ENCODE measurements at regions of chr6 and their contacts with region 1.

Region 1: GRCh38 chr6:41735427-41736356 is at the start of gene TFEB:
- DNase-seq: peak; percentile 96
- H3K4me3 ChIP-seq: peak within 1 kb of the TSS; percentile 79 to 98 (median 86)
- H3K27ac ChIP-seq: peak within 1 kb of the TSS; percentile 97 to 98 (median 98)
- H3K4me1 ChIP-seq: peaks cover 27 to 41% (median 32%) of the 10 kb centered on the region in 4 donors
- H3K27me3 ChIP-seq: no peaks in the 10 kb centered on the region
- CTCF ChIP-seq: peak; percentile 76 to 94 (median 88)
- EP300 ChIP-seq: no peak
- POLR2A ChIP-seq: no peak
- total RNA-seq, gene TFEB: 30.4 to 47.1 (median 38.1) TPM

Region 2: DNA sequence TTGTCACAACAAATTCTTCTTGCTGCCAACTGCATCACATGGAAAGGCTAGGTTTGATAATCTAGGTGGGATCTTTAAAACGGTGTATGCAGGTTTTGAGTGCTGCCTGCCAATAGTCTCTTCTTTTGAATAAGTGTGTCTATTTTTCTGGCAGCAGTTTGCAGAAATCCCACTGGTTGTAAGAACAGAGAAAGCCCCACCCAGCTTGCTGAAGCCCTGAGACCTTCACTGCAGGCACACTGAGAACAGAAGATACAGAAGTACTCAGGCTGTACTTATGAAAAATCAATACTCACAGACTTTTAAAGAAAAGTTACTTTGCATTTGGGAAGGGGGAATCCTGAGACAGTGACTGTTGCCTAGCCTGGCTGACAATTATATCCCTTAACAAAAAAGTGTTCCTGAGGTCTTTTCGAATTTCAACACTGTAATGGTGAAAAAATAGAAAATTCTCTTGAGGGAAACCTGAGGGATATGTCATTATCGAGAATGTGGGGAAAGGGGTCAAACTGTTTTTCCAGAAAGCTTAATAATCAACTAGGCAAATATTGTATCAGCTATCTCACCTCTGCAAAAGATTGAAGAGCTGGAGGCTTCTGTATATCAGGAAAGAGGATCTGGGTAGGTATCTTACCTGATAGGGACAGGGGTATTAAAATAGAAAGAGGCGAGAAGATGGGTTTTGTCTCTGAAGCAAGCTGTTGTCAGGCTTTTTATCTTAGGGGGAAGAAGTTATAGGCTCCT is 1348.4 kb before region 1 on chr6:
- in situ Hi-C with region 1: no loop called
- intact Hi-C with region 1: no loop called
- DNase-seq: no peak
- H3K4me3 ChIP-seq: no peak overlapping the region
- H3K27ac ChIP-seq: no peak overlapping the region
- H3K4me1 ChIP-seq: no peaks in the 10 kb centered on the region
- H3K27me3 ChIP-seq: peaks cover 19% of the 10 kb centered on the region
- CTCF ChIP-seq: no peak
- EP300 ChIP-seq: no peak
- POLR2A ChIP-seq: no peak

Region 3: DNA sequence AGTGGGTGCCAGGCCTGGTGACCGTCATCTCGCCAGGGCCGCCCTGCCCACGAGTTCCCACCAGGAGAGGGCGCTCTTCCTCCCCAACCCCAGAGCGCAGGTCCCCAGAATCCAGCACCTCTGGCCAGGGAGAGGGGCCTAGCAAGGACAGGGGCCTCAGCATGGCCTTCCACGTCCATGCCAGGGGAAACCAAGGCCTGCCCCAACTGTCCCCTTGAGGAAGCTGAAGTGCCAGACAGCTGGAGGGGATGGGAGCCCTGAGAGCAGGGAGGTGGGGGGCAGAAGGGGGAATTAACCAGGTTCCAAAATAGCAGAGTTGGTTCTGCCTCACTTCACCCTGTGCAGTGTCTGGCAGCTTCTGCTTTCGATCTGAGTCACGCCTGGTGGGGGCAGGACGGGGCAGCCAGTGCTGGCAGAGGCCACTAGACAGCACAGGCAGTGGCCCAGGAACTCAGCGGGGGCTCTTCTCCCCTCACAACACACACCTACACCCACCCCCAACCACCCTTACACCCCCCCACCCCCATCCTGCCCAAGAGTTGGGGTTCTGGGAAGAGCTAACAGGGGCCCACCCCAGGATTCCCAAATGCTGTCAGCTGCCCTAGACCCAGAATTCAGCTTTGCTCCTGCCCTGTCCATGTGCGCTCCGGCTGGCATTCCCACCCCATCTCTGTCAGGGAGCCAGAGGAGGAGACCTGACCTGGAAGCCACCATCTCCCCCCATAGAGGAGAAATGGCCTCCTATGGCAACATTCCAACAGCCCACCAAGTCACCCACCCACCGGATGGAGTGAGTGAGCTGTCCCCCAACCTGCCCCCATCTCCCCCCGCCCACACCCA is 29.5 kb before region 1 on chr6:
- in situ Hi-C with region 1: no loop called
- intact Hi-C with region 1: loop called (anchors 1 kb)
- DNase-seq: peak; percentile 84
- H3K4me3 ChIP-seq: no peak overlapping the region
- H3K27ac ChIP-seq: peak overlapping the region; percentile 66 to 87 (median 78)
- H3K4me1 ChIP-seq: peaks cover 27 to 46% (median 32%) of the 10 kb centered on the region in 4 donors
- H3K27me3 ChIP-seq: no peaks in the 10 kb centered on the region
- CTCF ChIP-seq: peak; percentile 79 to 92 (median 84)
- EP300 ChIP-seq: no peak
- POLR2A ChIP-seq: no peak

Region 4: DNA sequence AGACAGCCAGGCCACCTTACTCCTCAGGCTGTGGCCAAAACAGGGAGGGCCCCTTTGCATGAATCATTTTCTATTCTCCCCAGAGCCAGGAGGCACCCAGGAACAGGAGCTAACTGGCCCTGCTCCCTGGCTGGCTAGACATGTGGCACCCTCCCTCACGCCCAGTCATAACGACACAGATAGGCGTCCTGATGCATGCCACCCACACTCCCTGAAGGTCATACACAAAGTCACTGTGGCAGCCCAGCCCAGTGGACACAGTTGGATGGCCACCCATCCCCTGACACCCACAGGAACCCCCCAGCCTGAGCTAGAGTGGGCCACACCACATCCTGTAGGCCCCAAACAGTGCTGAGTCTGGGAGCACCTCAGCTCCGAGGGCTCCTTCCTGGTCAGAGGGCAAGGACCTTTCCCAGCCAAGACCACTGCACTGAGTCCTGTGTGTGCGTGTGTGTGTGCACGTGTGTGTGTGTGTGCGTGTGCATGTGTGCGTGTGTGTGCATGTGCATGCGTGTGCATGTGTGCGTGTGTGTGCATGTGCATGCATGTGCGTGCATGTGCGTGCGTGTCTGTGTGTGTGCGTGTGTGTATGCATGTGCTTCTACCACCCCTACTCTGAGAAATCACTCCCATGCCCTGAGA is 21.9 kb before region 1 on chr6:
- in situ Hi-C with region 1: no loop called
- intact Hi-C with region 1: loop called (anchors 2 kb)
- DNase-seq: no peak
- H3K4me3 ChIP-seq: no peak overlapping the region
- H3K27ac ChIP-seq: peak overlapping the region; percentile 23 to 79 (median 64)
- H3K4me1 ChIP-seq: peaks cover 18 to 51% (median 30%) of the 10 kb centered on the region in 4 donors
- H3K27me3 ChIP-seq: no peaks in the 10 kb centered on the region
- CTCF ChIP-seq: no peak
- EP300 ChIP-seq: no peak
- POLR2A ChIP-seq: no peak

Measured in transverse colon (tissue), 4 donors.